ENCODE measurements at regions of chr17 and their contacts with region 1.

Region 1: GRCh38 chr17:45148183-45149036 is at the start of gene HEXIM1:
- DNase-seq: peak; percentile 100
- H3K4me3 Mint-ChIP-seq: peak within 1 kb of the TSS; percentile 98
- H3K27ac Mint-ChIP-seq: peak within 1 kb of the TSS; percentile 100
- H3K4me1 Mint-ChIP-seq: peaks cover 39% of the 10 kb centered on the region
- H3K27me3 Mint-ChIP-seq: peaks cover 14% of the 10 kb centered on the region
- CTCF ChIP-seq: no peak
- total RNA-seq, gene HEXIM1: 57.2 and 64.7 TPM in 2 replicates

Region 2: DNA sequence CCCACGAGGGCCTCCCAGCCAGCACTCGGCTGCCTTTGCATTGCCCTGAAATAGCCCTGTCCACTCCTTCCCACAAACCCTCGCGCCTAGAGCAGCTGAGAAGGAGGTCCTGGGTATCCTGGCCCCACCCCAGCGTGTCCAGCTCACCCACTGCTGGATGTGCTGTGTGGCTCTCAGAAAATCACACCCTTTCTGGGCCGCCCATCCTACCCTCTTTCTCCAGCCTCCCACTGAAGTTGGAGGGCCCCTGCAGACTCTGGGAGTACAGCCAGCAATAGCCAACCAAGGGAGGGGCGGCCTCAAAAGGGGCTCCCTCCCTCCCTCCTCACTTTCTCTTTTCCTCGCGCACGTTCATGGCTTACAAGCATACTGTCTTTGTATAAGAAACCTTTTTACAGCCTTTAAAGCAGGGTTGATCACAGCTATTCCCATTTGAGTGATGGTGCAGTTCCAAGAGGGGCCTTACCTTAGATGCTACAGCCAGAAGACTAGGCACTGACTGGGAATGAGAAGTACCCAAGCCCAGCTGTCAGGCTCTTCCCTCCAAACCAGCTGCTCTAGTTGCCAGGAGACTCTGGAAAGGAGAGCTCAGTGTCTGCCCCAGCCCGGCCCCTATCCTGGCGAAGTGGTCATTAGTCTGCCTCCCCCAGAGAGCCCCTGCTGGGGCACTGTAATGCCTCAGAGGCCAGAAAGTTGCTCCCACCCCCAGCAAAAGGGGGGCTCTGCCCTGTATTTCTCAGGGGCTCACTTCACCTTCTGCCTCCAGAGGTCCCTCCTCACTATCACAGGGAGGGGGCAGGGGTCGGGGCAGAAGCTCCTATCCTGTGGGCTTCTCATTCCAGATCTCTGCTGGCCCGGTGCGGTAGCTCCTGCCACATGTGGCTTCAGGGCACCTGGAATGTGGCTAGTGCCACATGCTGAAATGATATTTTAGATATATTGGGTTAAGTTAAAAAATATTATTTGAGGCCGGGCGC is 135.1 kb before region 1 on chr17:
- CTCF ChIA-PET with region 1: no interaction called
- intact Hi-C with region 1: no loop called
- DNase-seq: no peak
- H3K4me3 Mint-ChIP-seq: no peak overlapping the region
- H3K27ac Mint-ChIP-seq: no peak overlapping the region
- H3K4me1 Mint-ChIP-seq: peaks cover 12% of the 10 kb centered on the region
- H3K27me3 Mint-ChIP-seq: peaks cover 29% of the 10 kb centered on the region
- CTCF ChIP-seq: no peak

Region 3: GRCh38 chr17:45172454-45173286 is 24.3 kb after region 1 on chr17:
- CTCF ChIA-PET with region 1: interaction called, 96 read pairs
- intact Hi-C with region 1: loop called (anchors 1 kb)
- DNase-seq: peak; percentile 99
- H3K4me3 Mint-ChIP-seq: peak overlapping the region; percentile 63
- H3K27ac Mint-ChIP-seq: peak overlapping the region; percentile 96
- H3K4me1 Mint-ChIP-seq: peaks cover 62% of the 10 kb centered on the region
- H3K27me3 Mint-ChIP-seq: no peaks in the 10 kb centered on the region
- CTCF ChIP-seq: peak; percentile 28

Region 4: GRCh38 chr17:45197555-45198334 is 49.3 kb after region 1 on chr17:
- CTCF ChIA-PET with region 1: interaction called, 253 read pairs
- intact Hi-C with region 1: loop called (anchors 1 kb)
- DNase-seq: peak; percentile 100
- H3K4me3 Mint-ChIP-seq: no peak overlapping the region
- H3K27ac Mint-ChIP-seq: peak overlapping the region; percentile 86
- H3K4me1 Mint-ChIP-seq: peaks cover 30% of the 10 kb centered on the region
- H3K27me3 Mint-ChIP-seq: no peaks in the 10 kb centered on the region
- CTCF ChIP-seq: peak; percentile 100

Region 5: GRCh38 chr17:45228763-45229539 is 80.5 kb after region 1 on chr17:
- CTCF ChIA-PET with region 1: interaction called, 24 read pairs
- intact Hi-C with region 1: no loop called
- DNase-seq: peak; percentile 58
- H3K4me3 Mint-ChIP-seq: no peak overlapping the region
- H3K27ac Mint-ChIP-seq: no peak overlapping the region
- H3K4me1 Mint-ChIP-seq: peaks cover 22% of the 10 kb centered on the region
- H3K27me3 Mint-ChIP-seq: peaks cover 23% of the 10 kb centered on the region
- CTCF ChIP-seq: no peak

Measured in Calu3 (cell line).